Naive thymus-derived CD4-positive, alpha-beta T cell (primary cell): ENCODE measurements at regions of chr11 and their contacts with region 1.

Region 1: DNA sequence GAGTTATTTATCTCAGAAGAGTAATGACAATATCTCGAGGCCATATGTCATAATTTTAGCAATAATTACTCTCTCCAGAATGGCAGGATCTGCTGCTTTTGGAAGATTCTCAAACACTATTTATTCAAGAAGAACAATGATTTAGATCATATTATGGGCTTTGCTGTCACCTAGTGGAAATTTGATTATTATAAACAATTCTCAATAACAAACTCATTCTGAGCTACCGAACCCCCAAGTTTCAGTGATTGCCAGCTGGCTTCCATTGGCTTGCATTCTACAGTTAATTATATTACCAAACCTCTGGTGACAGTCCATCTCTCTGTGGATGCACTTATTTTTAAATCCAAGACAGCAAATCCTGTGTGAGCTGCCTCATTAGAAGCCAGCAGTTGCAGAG is 27.9 kb upstream of the SLC36A4 start:
- DNase-seq: peak in 5 of 9 donors; percentile 7 to 29 (median 20)
- ATAC-seq: no peak
- H3K4me3 ChIP-seq: no peak overlapping the region
- H3K4me3 Mint-ChIP-seq: no peak overlapping the region
- H3K27ac ChIP-seq: no peak overlapping the region
- H3K27ac Mint-ChIP-seq: no peak overlapping the region
- H3K4me1 ChIP-seq: no peaks in the 10 kb centered on the region
- H3K4me1 Mint-ChIP-seq: no peaks in the 10 kb centered on the region
- H3K27me3 ChIP-seq: no peaks in the 10 kb centered on the region
- H3K27me3 Mint-ChIP-seq: peaks cover 0 to 8% (median 0%) of the 10 kb centered on the region in 5 donors

Region 2: DNA sequence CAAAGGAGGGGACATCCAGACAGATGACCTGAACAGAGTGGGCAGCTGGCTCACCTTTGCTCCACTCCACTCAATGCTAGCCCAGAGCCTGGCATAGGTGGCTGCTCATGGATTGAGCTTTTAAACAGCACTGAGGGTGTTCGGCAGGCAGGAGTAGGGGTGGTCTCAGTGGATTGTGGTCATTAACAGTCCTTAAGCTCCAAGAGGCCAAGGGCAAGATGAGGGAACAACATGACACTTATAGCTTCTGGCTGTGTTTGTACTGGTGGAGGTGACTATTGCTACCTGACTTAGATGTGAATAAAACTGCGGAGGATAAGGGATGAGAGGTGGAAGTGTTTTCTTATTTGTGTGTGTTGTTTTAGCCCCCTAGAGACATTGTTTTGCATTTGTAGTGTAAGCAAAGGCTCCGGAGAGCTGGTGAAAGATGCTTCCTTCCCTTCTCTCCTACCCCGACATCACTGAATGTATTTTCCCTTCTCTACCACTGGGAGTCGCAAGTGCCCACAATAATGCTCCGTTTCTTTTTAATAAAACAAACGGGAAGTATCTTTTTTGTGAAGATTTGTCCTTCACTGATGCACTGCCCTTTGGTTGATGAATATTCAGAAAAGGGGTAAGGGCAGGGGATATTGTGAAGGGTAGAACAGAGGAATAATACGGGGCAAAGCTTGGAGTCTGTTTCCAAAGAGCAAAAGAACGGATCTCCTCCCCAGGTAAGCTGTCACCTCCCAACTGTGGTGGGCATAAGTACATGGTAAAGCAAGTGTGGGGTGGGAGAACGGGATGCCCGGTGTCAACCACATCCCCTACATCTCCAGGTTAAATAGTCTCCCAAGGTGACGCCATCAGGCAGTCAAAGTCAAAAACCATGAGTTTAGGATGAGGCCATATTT is 283.7 kb before region 1 on chr11:
- CTCF ChIA-PET with region 1: interaction called, 11 read pairs
- POLR2A ChIA-PET with region 1: no interaction called
- intact Hi-C with region 1: loop called in 1 of 2 experiments (anchors 1 kb)
- DNase-seq: peak in 2 of 9 donors; percentile 6 to 9
- ATAC-seq: peak; percentile 53
- H3K4me3 ChIP-seq: no peak overlapping the region
- H3K4me3 Mint-ChIP-seq: no peak overlapping the region
- H3K27ac ChIP-seq: no peak overlapping the region
- H3K27ac Mint-ChIP-seq: no peak overlapping the region
- H3K4me1 ChIP-seq: no peaks in the 10 kb centered on the region
- H3K4me1 Mint-ChIP-seq: no peaks in the 10 kb centered on the region
- H3K27me3 ChIP-seq: no peaks in the 10 kb centered on the region
- H3K27me3 Mint-ChIP-seq: peaks cover 0 to 18% (median 9%) of the 10 kb centered on the region in 5 donors

Region 3: GRCh38 chr11:93089474-93090102 is 136.1 kb before region 1 on chr11:
- CTCF ChIA-PET with region 1: no interaction called
- POLR2A ChIA-PET with region 1: no interaction called
- intact Hi-C with region 1: loop called in 1 of 2 experiments (anchors 1 kb)
- DNase-seq: no peak
- ATAC-seq: no peak
- H3K4me3 ChIP-seq: no peak overlapping the region
- H3K4me3 Mint-ChIP-seq: no peak overlapping the region
- H3K27ac ChIP-seq: no peak overlapping the region
- H3K27ac Mint-ChIP-seq: no peak overlapping the region
- H3K4me1 ChIP-seq: no peaks in the 10 kb centered on the region
- H3K4me1 Mint-ChIP-seq: peaks cover 0 to 3% (median 0%) of the 10 kb centered on the region in 7 donors
- H3K27me3 ChIP-seq: no peaks in the 10 kb centered on the region
- H3K27me3 Mint-ChIP-seq: peaks cover 4 to 21% (median 12%) of the 10 kb centered on the region in 5 donors

Region 4: DNA sequence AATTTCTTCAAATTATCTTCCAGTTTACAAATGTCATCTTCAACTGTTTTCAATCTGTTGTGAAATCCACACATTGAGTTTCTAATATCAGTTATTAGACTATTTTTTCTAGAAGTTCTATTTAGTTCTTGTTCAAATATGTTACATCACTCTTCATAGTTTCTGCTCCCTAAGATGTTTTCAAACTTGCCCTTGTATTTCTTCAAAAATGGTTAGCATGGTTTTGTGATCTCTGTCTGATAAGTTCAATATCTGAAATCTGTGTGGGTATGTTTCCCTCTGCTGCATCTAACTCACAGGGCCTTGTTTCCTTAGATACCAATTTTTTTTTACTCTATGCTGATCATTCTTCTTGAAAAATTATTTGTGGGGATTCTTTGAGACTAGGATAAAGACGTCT is 18.4 kb after region 1 on chr11:
- CTCF ChIA-PET with region 1: no interaction called
- POLR2A ChIA-PET with region 1: no interaction called
- intact Hi-C with region 1: no loop called
- DNase-seq: no peak
- ATAC-seq: no peak
- H3K4me3 ChIP-seq: no peak overlapping the region
- H3K4me3 Mint-ChIP-seq: no peak overlapping the region
- H3K27ac ChIP-seq: no peak overlapping the region
- H3K27ac Mint-ChIP-seq: no peak overlapping the region
- H3K4me1 ChIP-seq: no peaks in the 10 kb centered on the region
- H3K4me1 Mint-ChIP-seq: no peaks in the 10 kb centered on the region
- H3K27me3 ChIP-seq: no peaks in the 10 kb centered on the region
- H3K27me3 Mint-ChIP-seq: peaks cover 13 to 32% (median 30%) of the 10 kb centered on the region in 5 donors